ENCODE measurements at regions of chr1 and their contacts with region 1.

Region 1: GRCh38 chr1:43434256-43434655 is 19.5 kb downstream of the HYI start:
- DNase-seq: no peak
- H3K4me3 ChIP-seq: no peak overlapping the region
- H3K4me3 Mint-ChIP-seq: no peak overlapping the region
- H3K27ac Mint-ChIP-seq: no peak overlapping the region
- H3K4me1 ChIP-seq: no peaks in the 10 kb centered on the region
- H3K4me1 Mint-ChIP-seq: no peaks in the 10 kb centered on the region
- H3K27me3 ChIP-seq: no peaks in the 10 kb centered on the region
- H3K27me3 Mint-ChIP-seq: no peaks in the 10 kb centered on the region
- CTCF ChIP-seq: no peak

Region 2: DNA sequence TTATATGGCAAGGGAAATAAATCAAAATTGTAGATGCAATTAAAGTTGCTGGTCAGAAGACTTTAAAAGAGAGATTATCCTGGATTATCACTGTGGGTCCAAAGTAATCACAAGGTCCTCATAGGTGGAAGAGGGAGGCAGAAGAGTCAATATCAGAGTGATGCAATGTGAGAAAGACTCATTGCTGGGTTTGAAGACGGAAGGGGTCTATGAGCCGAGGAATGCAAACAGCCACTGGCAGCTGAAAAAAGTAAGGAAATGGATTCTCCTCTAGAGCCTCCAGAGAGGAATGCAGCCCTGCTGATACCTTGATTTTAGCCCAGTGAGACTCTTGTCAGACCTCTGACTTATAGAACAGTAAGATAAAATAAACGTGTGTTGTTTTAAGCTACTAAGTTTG is 1965.8 kb after region 1 on chr1:
- CTCF ChIA-PET with region 1: no interaction called
- POLR2A ChIA-PET with region 1: interaction called, 13 read pairs
- intact Hi-C with region 1: no loop called
- DNase-seq: peak; percentile 32 to 43
- H3K4me3 ChIP-seq: no peak overlapping the region
- H3K4me3 Mint-ChIP-seq: no peak overlapping the region
- H3K27ac Mint-ChIP-seq: peak overlapping the region; percentile 42
- H3K4me1 ChIP-seq: peaks cover 17% of the 10 kb centered on the region
- H3K4me1 Mint-ChIP-seq: peaks cover 27% of the 10 kb centered on the region
- H3K27me3 ChIP-seq: no peaks in the 10 kb centered on the region
- H3K27me3 Mint-ChIP-seq: no peaks in the 10 kb centered on the region
- CTCF ChIP-seq: no peak

Measured in Caco-2 (cell line).